ENCODE measurements at regions of chr11 and their contacts with region 1.

Region 1: DNA sequence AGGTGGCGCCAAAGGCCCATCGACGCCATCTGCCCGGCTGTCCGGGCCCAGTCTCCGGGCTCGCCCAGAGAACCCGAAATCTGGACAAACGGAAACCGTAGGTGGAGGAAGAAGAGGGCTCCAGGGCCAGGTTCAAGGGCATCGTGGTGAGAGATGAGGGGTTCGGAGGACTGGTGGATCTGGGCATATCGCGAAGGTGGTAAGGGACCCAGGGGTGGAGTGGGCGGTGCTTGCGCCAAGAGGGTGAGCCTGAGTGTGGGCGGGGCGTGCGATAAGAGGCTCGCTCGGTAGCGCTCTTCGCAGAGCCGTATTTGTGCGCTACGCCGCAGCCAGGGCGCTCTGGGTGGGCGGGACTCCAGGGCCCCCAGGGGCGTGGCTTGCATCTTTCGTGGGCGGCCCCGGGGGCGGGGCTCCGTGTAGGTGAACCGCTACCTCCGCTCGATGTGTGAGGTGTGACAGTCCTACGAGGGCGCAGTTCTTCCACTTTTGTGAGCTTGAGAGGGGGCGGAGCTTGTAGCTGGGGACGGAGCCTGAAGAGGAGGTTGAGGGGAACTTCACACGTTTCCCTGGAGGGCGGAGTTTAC is 4.8 kb downstream of the CD248 start:
- DNase-seq: peak; percentile 98
- ATAC-seq: peak; percentile 74
- H3K4me3 Mint-ChIP-seq: peak overlapping the region; percentile 87
- H3K27ac Mint-ChIP-seq: peak overlapping the region; percentile 99
- H3K4me1 Mint-ChIP-seq: peaks cover 29% of the 10 kb centered on the region
- H3K27me3 Mint-ChIP-seq: no peaks in the 10 kb centered on the region

Region 2: GRCh38 chr11:66258473-66258893 is 53.6 kb before region 1 on chr11:
- CTCF ChIA-PET with region 1: no interaction called
- POLR2A ChIA-PET with region 1: no interaction called
- DNase-seq: no peak
- ATAC-seq: peak; percentile 1
- H3K4me3 Mint-ChIP-seq: peak overlapping the region; percentile 83
- H3K27ac Mint-ChIP-seq: peak overlapping the region; percentile 82
- H3K4me1 Mint-ChIP-seq: peaks cover 35% of the 10 kb centered on the region
- H3K27me3 Mint-ChIP-seq: no peaks in the 10 kb centered on the region

Region 3: DNA sequence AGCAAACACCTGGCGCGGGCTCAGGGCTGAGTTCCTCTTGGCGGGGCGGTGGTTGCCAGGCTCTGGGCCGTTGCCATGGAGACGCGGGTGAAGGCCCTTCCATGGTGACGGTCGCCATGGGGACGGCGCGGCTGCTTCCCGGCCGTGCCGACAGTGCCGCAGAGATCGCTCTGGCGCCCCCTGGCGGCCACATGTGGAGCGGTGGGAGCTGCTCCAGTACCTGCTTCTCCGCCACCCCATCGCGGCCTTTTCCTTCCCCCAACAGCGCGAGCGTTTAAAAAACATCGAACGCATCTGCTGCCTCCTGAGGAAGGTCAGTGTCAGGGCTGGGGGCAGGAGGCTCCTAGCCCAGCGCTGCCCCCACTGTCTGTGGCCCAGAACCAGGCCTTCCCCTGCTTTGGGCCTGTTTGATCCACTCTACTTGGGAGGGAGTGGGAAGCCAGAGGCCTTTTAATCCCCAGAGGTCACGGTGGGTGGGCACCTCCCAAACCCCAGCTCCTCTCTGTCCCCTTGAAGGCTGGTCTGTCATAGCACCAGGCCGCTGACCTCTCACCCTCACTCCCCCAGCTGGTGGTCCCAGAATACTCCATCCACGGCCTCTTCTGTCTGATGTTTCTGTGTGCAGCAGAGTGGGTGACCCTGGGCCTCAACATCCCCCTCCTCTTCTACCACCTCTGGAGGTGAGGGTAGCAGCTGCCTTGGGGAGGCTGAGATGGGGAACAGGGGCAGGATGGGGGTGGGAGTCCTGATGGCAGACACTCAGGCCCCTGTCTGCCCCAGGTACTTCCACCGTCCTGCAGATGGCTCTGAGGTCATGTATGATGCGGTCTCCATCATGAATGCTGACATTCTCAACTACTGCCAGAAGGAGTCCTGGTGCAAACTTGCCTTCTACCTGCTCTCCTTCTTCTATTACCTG is 29.3 kb before region 1 on chr11:
- CTCF ChIA-PET with region 1: interaction called, 21 read pairs
- POLR2A ChIA-PET with region 1: interaction called, 3 read pairs
- DNase-seq: peak; percentile 99
- ATAC-seq: peak; percentile 86
- H3K4me3 Mint-ChIP-seq: no peak overlapping the region
- H3K27ac Mint-ChIP-seq: peak overlapping the region; percentile 69
- H3K4me1 Mint-ChIP-seq: peaks cover 44% of the 10 kb centered on the region
- H3K27me3 Mint-ChIP-seq: peaks cover 7% of the 10 kb centered on the region

Region 4: GRCh38 chr11:66299186-66299585 is 12.9 kb before region 1 on chr11:
- CTCF ChIA-PET with region 1: interaction called, 59 read pairs
- POLR2A ChIA-PET with region 1: interaction called, 6 read pairs
- DNase-seq: no peak
- ATAC-seq: no peak
- H3K4me3 Mint-ChIP-seq: no peak overlapping the region
- H3K27ac Mint-ChIP-seq: no peak overlapping the region
- H3K4me1 Mint-ChIP-seq: no peaks in the 10 kb centered on the region
- H3K27me3 Mint-ChIP-seq: no peaks in the 10 kb centered on the region

Region 5: GRCh38 chr11:66336234-66337102 is 24.4 kb after region 1 on chr11 and contains the start of gene RIN1:
- CTCF ChIA-PET with region 1: interaction called, 194 read pairs
- POLR2A ChIA-PET with region 1: interaction called, 25 read pairs
- DNase-seq: peak; percentile 82
- ATAC-seq: peak; percentile 80
- H3K4me3 Mint-ChIP-seq: peak within 1 kb of the TSS; percentile 50
- H3K27ac Mint-ChIP-seq: peak within 1 kb of the TSS; percentile 80
- H3K4me1 Mint-ChIP-seq: peaks cover 40% of the 10 kb centered on the region
- H3K27me3 Mint-ChIP-seq: no peaks in the 10 kb centered on the region
- total RNA-seq, gene RIN1: 1.3 TPM

Region 6: DNA sequence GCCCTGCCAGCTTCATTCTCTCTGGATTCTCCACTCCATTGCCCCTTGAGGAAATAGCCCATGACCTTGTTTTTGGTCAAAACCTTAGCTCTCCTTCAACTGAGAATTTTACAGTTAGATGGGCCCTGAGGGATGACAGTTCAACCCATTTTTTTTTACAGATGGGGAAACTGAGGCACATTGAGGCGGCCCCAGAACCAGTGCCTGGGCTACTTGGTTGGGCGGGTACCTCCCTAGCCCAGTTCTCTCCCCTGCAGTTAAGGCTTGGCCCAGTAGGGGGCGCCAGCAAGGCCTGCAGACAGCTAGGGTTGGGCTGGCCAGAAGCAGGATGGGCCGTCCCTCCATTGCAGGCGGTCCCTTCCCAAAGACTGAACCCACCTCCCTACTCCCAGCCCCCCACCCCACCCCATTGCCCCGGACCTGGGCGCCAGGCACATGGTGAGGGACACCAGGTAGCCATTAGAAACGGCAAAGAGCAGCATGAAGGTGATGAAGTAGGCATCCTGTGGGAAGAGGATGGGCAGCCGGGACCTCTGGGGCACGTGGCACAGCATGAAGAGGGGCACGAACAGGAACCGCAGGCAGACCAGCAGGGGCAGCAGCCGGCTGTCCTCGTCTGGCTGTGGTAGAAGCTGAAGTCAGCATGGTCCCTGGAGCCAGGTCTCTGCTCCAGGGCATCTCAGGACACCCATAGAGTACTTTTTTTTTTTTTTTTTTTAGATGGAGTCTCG is 51.9 kb after region 1 on chr11:
- CTCF ChIA-PET with region 1: interaction called, 37 read pairs
- POLR2A ChIA-PET with region 1: no interaction called
- DNase-seq: peak; percentile 80
- ATAC-seq: peak; percentile 78
- H3K4me3 Mint-ChIP-seq: no peak overlapping the region
- H3K27ac Mint-ChIP-seq: no peak overlapping the region
- H3K4me1 Mint-ChIP-seq: no peaks in the 10 kb centered on the region
- H3K27me3 Mint-ChIP-seq: no peaks in the 10 kb centered on the region

Region 7: DNA sequence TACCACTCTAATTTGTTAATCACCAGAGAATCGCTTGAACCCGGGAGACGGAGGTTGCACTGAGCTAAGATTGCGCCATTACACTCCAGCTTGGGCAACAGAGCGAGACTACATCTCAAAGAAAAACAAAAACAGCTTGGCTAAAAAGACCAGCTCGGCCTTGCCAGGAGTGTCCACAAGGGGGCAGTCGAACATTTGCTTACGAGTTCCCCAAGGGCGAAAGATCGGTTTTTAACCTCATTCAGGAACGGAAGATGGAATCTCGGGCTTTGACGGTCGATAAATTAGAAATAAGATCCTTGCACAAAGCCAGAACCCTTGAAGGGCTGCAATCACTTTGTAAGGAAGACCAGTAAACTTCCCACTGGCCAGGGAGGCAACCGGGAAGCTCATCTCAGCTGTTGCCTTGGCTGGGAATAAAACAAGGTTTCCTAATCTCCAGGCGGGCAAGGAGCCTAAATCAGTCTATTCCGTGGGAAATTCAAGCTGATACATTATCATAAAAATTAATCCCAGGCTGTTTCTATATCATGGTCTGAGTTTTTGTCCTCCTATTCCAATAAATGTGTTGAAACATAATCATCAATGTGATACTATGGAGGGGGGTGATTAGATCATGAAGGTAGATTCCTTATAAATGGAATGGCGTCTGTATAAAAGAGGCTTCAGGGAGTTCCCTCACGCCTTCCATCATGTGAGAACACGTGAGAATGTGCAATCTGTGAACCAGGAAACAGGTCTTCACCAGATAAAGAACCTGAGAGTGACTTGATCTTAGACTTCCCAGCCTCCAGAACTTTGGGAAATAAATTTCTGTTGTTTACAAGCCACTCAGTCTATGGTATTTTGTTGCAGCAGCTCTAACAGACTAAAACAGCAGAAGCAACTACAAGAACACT is 74.4 kb after region 1 on chr11:
- CTCF ChIA-PET with region 1: interaction called, 172 read pairs
- POLR2A ChIA-PET with region 1: no interaction called
- DNase-seq: peak; percentile 91
- ATAC-seq: peak; percentile 71
- H3K4me3 Mint-ChIP-seq: peak overlapping the region; percentile 20
- H3K27ac Mint-ChIP-seq: no peak overlapping the region
- H3K4me1 Mint-ChIP-seq: peaks cover 11% of the 10 kb centered on the region
- H3K27me3 Mint-ChIP-seq: no peaks in the 10 kb centered on the region